ENCODE measurements at regions of chr12 and their contacts with region 1.

Region 1: GRCh38 chr12:6554168-6555017 is 1.4 kb downstream of the IFFO1 start:
- DNase-seq: peak; percentile 80
- H3K4me3 ChIP-seq: peak overlapping the region; percentile 67 to 86 (median 67)
- H3K27ac ChIP-seq: peak overlapping the region; percentile 15
- H3K4me1 ChIP-seq: peaks cover 44% of the 10 kb centered on the region
- H3K27me3 ChIP-seq: no peaks in the 10 kb centered on the region
- CTCF ChIP-seq: peak; percentile 57 to 84
- POLR2A ChIP-seq: no peak

Region 2: DNA sequence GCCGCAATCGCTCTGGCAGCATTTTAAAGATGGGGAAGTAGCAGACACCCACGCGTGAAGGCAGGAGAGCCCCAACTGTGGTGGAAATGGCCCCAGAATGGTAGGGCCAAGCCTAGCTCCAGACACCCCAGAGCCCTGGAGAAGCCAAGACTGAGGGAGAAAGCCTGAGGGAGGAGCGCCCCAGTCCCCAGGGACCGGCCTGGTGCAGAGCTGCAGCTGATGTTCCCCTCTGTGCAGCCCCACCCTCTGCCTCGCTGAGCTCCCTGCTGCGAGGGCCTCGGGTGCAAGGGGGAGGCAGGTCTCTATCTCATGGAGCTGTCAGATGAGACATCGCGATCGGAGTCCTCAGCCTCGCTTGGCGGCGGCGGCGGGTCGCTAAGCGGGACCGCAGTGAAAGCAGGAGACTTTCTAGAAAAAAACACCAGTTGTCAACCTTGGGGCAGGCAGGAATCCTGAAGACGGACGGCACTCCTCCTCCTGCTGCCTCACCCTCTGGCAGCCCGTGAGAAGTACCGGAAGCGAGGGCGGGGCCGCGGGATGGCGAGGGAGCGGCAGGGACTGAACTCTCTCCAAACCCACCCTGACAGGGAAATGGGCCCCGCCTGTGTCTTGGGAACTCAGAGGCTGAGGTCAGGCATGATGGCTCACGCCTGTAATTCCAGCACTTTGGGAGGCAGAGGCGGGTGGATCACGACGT is 14.1 kb before region 1 on chr12:
- CTCF ChIA-PET with region 1: interaction called, 145 read pairs
- POLR2A ChIA-PET with region 1: interaction called, 14 read pairs
- dilution Hi-C with region 1: no loop called
- intact Hi-C with region 1: loop called (anchors 2 kb)
- DNase-seq: peak; percentile 73
- H3K4me3 ChIP-seq: no peak overlapping the region
- H3K27ac ChIP-seq: no peak overlapping the region
- H3K4me1 ChIP-seq: peaks cover 39% of the 10 kb centered on the region
- H3K27me3 ChIP-seq: no peaks in the 10 kb centered on the region
- CTCF ChIP-seq: no peak
- POLR2A ChIP-seq: no peak

Region 3: GRCh38 chr12:6697584-6698351 is 143.4 kb after region 1 on chr12:
- CTCF ChIA-PET with region 1: interaction called, 6 read pairs
- POLR2A ChIA-PET with region 1: no interaction called
- dilution Hi-C with region 1: no loop called
- intact Hi-C with region 1: loop called (anchors 5 kb)
- DNase-seq: peak; percentile 58
- H3K4me3 ChIP-seq: no peak overlapping the region
- H3K27ac ChIP-seq: no peak overlapping the region
- H3K4me1 ChIP-seq: peaks cover 4% of the 10 kb centered on the region
- H3K27me3 ChIP-seq: peaks cover 28 to 42% of the 10 kb centered on the region in 2 experiments
- CTCF ChIP-seq: peak; percentile 74 to 80
- POLR2A ChIP-seq: no peak